Activated CD4-positive, alpha-beta T cell treated with anti-CD3 and anti-CD28 coated beads, Interleukin-2, amount 10 ng/mL, durations not matched to agents 7 days and 5 days (primary cell): ENCODE measurements at regions of chr14 and their contacts with region 1.

Region 1: GRCh38 chr14:50860478-50861086 is 11.3 kb upstream of the ABHD12B start:
- DNase-seq: peak; percentile 92
- H3K4me3 Mint-ChIP-seq: peak overlapping the region; percentile 84
- H3K27ac Mint-ChIP-seq: peak overlapping the region; percentile 96
- H3K4me1 Mint-ChIP-seq: peaks cover 18% of the 10 kb centered on the region
- H3K27me3 Mint-ChIP-seq: peaks cover 16% of the 10 kb centered on the region

Region 2: DNA sequence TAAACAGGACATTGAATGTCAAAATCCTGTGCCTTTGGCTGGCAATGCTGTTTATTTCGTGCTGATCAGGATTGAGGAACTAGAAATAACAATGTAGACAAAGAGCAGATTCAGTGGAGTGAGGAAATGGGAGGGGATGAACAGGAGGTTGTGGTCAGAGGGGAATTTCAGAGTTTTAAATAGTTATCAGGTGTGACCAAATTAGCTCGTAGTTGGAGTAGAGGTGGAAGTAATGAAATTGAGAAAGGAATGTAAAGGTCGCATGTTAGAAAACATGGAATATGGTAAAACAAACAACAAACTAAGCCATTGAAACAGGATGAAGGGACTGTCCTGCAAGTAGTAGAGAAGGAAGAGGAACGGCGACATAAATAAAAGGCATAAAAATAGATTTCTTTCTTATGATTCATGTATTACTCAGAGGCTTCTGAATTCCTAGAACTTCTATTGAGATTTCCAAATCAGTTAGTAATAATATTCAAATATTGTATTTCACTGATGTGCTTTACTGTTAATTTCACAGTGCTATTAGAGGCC is 183.0 kb before region 1 on chr14:
- CTCF ChIA-PET with region 1: no interaction called
- POLR2A ChIA-PET with region 1: no interaction called
- DNase-seq: no peak
- H3K4me3 Mint-ChIP-seq: no peak overlapping the region
- H3K27ac Mint-ChIP-seq: no peak overlapping the region
- H3K4me1 Mint-ChIP-seq: peaks cover 10% of the 10 kb centered on the region
- H3K27me3 Mint-ChIP-seq: peaks cover 8% of the 10 kb centered on the region

Region 3: DNA sequence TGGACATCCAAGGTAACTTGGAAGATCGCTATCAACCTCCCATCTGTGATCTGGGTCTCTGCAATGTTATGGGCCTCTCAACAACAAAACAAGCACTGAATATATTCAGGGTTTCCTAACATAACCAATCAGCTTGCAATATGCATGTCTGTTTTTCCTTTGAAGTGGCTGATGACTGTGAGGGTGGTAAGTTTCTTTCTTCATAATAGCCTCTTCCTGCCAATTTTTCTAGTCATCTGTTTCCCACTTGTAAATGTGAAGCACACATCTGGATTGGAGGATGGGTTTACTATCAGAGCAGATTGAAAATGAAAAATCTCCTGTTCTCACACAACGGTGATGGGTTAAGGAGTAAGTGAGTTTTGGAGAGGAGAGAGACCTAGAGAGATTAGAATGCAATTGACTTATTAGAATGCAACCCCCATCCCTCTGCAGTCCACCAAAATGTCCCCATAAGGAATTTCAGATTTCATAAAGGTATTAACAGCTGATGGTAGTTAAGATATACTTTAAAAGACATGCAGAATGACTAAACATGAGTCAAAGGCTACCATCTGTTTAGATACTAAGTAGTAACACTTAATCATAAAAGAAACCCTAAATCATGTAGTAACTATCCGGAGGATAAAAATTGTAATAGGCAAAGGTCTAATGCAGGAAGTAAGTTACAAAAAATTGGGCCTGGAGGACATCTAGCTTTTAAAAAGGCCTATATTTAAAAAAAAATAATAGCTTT is 134.0 kb before region 1 on chr14:
- CTCF ChIA-PET with region 1: interaction called, 10 read pairs
- POLR2A ChIA-PET with region 1: no interaction called
- DNase-seq: peak; percentile 39
- H3K4me3 Mint-ChIP-seq: peak overlapping the region; percentile 15
- H3K27ac Mint-ChIP-seq: peak overlapping the region; percentile 85
- H3K4me1 Mint-ChIP-seq: peaks cover 26% of the 10 kb centered on the region
- H3K27me3 Mint-ChIP-seq: no peaks in the 10 kb centered on the region

Region 4: GRCh38 chr14:50773632-50774541 is 86.7 kb before region 1 on chr14:
- CTCF ChIA-PET with region 1: interaction called, 31 read pairs
- POLR2A ChIA-PET with region 1: no interaction called
- DNase-seq: peak; percentile 24
- H3K4me3 Mint-ChIP-seq: no peak overlapping the region
- H3K27ac Mint-ChIP-seq: peak overlapping the region; percentile 26
- H3K4me1 Mint-ChIP-seq: peaks cover 31% of the 10 kb centered on the region
- H3K27me3 Mint-ChIP-seq: no peaks in the 10 kb centered on the region

Region 5: DNA sequence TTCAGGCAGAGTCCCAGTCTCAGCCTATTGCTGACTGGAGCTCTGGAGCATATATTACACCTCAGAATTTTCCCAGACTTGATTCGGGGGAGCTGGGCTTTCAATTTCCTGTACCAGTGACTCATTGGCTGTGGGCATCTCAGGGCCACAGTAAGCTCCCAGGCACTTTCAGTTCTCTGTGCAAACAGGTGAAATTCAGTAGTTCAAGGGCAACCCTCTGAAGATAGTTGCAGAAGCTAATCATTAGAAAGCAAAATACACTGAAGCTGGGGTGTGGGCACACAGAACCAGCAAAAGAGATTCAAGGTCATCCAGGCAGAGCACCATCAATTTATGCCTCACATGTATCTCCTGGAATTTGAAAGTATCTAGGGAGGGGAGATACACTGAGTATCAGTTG is 21.5 kb before region 1 on chr14:
- CTCF ChIA-PET with region 1: interaction called, 11 read pairs
- POLR2A ChIA-PET with region 1: no interaction called
- DNase-seq: no peak
- H3K4me3 Mint-ChIP-seq: no peak overlapping the region
- H3K27ac Mint-ChIP-seq: no peak overlapping the region
- H3K4me1 Mint-ChIP-seq: peaks cover 25% of the 10 kb centered on the region
- H3K27me3 Mint-ChIP-seq: peaks cover 2% of the 10 kb centered on the region

Region 6: DNA sequence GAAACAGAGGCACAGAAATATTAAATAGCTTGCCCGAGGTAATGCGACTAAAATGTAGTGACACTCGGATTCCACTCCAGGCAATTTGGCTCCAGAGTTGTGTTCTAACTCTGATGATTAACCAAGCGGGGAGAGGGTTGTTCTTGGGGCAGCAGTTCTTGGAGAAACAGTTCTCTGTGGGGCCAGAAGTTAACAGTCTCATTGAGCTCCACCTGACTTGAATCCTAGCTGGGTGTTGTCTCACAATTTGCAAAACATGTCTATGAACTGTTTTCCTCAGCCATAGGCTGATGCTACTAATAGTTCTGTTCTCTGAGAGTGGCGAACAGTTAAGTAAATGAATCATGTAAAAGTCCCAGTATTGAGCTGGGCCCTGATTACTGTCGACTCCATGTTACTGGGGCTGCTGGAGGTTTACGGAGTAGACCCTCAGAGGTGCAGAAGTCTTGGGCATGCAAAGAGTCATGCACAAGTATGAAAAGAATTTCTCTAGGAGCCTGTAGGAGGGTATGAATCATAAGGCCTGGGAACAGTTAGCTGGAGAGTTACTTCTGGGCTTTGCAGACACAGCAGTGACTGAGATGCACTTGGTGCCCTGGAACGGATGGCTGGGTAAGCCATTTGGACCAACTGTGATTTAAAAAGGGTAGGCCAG is 14.2 kb before region 1 on chr14:
- CTCF ChIA-PET with region 1: interaction called, 20 read pairs
- POLR2A ChIA-PET with region 1: no interaction called
- DNase-seq: no peak
- H3K4me3 Mint-ChIP-seq: no peak overlapping the region
- H3K27ac Mint-ChIP-seq: no peak overlapping the region
- H3K4me1 Mint-ChIP-seq: peaks cover 4% of the 10 kb centered on the region
- H3K27me3 Mint-ChIP-seq: peaks cover 12% of the 10 kb centered on the region

Region 7: DNA sequence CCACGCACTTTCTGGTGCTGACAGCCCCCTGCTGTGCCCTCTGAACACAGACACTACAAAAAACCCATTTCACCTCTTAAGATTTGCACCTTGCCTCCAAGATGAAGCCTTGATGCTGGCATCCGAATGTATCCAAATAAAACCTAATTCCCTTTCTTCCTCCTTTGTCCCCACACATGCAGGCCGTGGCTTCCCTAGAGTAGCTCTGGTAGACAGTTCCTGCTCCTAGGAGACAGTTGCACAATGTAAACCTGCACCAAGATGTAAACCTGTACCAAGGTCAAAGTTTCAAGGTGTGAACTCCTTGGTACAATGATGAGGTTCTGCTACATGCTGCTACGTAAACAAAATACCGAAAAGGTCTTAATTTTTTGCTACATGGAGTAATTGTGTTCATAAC is 10.6 kb after region 1 on chr14:
- CTCF ChIA-PET with region 1: interaction called, 12 read pairs
- POLR2A ChIA-PET with region 1: no interaction called
- DNase-seq: no peak
- H3K4me3 Mint-ChIP-seq: no peak overlapping the region
- H3K27ac Mint-ChIP-seq: no peak overlapping the region
- H3K4me1 Mint-ChIP-seq: peaks cover 38% of the 10 kb centered on the region
- H3K27me3 Mint-ChIP-seq: peaks cover 79% of the 10 kb centered on the region

Region 8: DNA sequence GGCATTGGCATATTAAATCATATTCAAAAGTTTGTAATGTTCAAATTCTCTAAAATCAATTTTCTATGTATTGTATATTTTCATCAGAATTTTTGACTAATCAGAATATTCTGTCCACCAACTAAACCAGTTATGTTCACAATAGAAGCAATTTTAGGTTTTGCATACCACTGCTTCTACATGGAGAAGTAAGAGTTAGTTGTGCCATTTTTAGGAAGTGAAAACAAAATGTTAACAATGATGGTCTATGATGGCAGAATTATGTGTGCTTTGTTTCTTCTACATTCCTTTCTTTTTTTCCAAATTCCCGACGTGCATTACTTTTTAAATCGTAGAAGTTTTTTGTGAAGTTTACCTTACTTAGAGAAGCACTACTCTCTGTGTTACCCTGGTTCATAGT is 40.8 kb after region 1 on chr14:
- CTCF ChIA-PET with region 1: no interaction called
- POLR2A ChIA-PET with region 1: no interaction called
- DNase-seq: no peak
- H3K4me3 Mint-ChIP-seq: no peak overlapping the region
- H3K27ac Mint-ChIP-seq: no peak overlapping the region
- H3K4me1 Mint-ChIP-seq: no peaks in the 10 kb centered on the region
- H3K27me3 Mint-ChIP-seq: peaks cover 17% of the 10 kb centered on the region

Region 9: DNA sequence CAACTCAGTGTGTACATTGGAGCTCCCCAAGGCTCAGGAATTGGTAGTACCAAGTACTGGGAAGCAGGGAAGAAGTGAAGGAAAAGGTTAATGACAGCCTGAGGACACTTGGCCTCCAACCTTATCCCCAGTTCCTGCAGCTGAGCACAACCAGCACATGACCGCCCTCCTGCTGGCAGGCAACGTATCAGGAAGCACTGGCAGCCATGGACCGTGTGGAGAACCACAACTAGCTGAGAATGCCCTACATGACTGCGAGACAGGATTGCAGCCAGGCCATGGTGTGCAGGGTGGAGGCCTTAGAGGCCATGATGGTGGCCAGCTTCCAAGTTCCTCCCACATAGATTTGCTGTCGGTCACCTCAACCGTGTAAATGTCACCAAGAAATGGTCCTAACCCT is 56.9 kb after region 1 on chr14:
- CTCF ChIA-PET with region 1: no interaction called
- POLR2A ChIA-PET with region 1: no interaction called
- DNase-seq: no peak
- H3K4me3 Mint-ChIP-seq: no peak overlapping the region
- H3K27ac Mint-ChIP-seq: no peak overlapping the region
- H3K4me1 Mint-ChIP-seq: no peaks in the 10 kb centered on the region
- H3K27me3 Mint-ChIP-seq: peaks cover 5% of the 10 kb centered on the region